ENCODE measurements at regions of chr4 and their contacts with region 1.

Region 1: GRCh38 chr4:42282081-42282901 is 115.0 kb upstream of the SHISA3 start:
- DNase-seq: peak; percentile 86
- H3K4me3 Mint-ChIP-seq: no peak overlapping the region
- H3K27ac Mint-ChIP-seq: no peak overlapping the region
- H3K4me1 Mint-ChIP-seq: no peaks in the 10 kb centered on the region
- H3K27me3 Mint-ChIP-seq: no peaks in the 10 kb centered on the region
- CTCF ChIP-seq: peak; percentile 82

Region 2: DNA sequence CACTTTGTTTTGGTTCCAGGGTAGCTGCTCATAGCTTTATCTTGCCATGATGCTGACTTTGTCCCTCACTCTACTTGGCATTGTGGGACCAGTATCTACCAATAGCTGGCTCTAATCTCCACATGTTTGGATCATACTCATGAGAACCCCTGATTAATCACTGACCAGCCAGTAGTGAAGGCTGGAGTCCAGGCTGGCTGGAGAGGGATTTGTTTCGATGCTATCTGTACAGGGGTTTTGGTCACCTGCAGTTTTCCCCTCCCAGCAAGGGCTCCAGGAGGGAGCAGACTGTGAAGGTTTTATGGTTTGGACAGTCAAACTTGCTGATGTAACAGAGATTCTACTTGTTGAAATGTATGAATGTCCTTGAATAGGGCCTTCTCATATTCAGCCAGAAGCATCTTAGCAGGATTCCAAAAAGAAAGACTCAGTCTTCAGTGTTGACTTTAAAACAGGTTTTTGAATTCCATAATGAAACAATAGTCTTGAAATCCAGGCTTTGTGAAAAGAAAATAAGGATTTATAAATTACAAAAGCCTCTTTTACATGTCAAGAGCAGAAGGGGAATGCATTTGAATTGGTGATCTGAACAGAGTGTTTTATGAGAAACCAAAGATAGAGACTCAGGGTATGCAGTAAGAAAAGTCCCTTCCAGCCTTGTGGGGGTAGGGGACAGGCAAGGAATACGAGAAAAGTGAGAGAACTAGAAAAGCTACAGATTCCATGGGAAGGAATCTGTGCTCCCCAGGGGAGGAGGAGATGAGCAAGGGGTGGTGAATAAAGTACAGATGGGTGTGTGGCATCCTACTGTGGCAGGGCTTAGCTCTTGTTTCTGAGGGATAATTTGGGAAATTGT is 11.9 kb after region 1 on chr4:
- CTCF ChIA-PET with region 1: interaction called, 17 read pairs
- POLR2A ChIA-PET with region 1: no interaction called
- intact Hi-C with region 1: no loop called
- DNase-seq: no peak
- H3K4me3 Mint-ChIP-seq: no peak overlapping the region
- H3K27ac Mint-ChIP-seq: no peak overlapping the region
- H3K4me1 Mint-ChIP-seq: no peaks in the 10 kb centered on the region
- H3K27me3 Mint-ChIP-seq: no peaks in the 10 kb centered on the region
- CTCF ChIP-seq: no peak

Region 3: DNA sequence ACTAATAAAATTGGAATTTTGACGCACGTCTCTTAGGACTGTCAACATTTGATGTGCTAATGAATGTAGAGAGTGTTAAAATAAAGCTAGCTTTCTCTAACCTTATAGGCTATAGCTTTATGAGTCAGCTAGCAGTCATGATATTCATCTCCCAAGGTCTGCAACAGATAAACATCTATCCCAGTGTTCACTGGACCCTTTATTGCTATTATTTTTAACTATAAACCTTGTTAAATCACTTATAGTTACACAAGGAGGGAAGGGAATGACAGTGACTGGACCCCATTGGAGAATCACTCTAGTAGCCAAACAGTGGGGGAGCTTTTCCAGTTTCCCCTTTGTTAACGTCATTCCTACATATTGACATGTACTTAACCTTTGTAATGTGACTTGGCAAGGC is 47.1 kb after region 1 on chr4:
- CTCF ChIA-PET with region 1: interaction called, 12 read pairs
- POLR2A ChIA-PET with region 1: no interaction called
- intact Hi-C with region 1: no loop called
- DNase-seq: no peak
- H3K4me3 Mint-ChIP-seq: no peak overlapping the region
- H3K27ac Mint-ChIP-seq: no peak overlapping the region
- H3K4me1 Mint-ChIP-seq: no peaks in the 10 kb centered on the region
- H3K27me3 Mint-ChIP-seq: no peaks in the 10 kb centered on the region
- CTCF ChIP-seq: no peak

Region 4: GRCh38 chr4:42519803-42520417 is 237.6 kb after region 1 on chr4:
- CTCF ChIA-PET with region 1: interaction called, 82 read pairs
- POLR2A ChIA-PET with region 1: interaction called, 5 read pairs
- intact Hi-C with region 1: loop called (anchors 1 kb)
- DNase-seq: peak; percentile 59
- H3K4me3 Mint-ChIP-seq: no peak overlapping the region
- H3K27ac Mint-ChIP-seq: no peak overlapping the region
- H3K4me1 Mint-ChIP-seq: peaks cover 4% of the 10 kb centered on the region
- H3K27me3 Mint-ChIP-seq: no peaks in the 10 kb centered on the region
- CTCF ChIP-seq: peak; percentile 40

Region 5: DNA sequence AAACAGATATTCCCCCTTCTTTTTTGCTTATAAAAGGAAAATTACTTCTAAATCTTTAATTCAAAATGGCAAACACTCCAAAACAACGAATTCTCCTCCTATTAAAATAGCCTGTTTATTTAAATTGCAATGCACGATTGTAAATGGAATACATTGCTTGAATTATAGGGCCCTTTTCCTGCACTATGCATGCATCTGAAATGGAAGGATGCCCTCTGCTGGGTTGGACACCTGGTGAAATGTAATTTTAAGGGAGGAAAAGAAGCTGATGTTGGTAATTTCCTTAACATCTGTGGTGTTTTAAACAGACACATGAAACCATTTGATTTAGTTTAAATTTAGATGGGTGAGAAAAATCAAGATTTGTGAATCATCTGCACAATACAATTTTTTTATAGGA is 683.0 kb after region 1 on chr4:
- CTCF ChIA-PET with region 1: no interaction called
- POLR2A ChIA-PET with region 1: no interaction called
- intact Hi-C with region 1: loop called (anchors 2 kb)
- DNase-seq: peak; percentile 50
- H3K4me3 Mint-ChIP-seq: no peak overlapping the region
- H3K27ac Mint-ChIP-seq: peak overlapping the region; percentile 69
- H3K4me1 Mint-ChIP-seq: peaks cover 11% of the 10 kb centered on the region
- H3K27me3 Mint-ChIP-seq: no peaks in the 10 kb centered on the region
- CTCF ChIP-seq: peak; percentile 33

Region 6: GRCh38 chr4:43103048-43103447 is 820.8 kb after region 1 on chr4:
- CTCF ChIA-PET with region 1: no interaction called
- POLR2A ChIA-PET with region 1: no interaction called
- intact Hi-C with region 1: no loop called
- DNase-seq: no peak
- H3K4me3 Mint-ChIP-seq: no peak overlapping the region
- H3K27ac Mint-ChIP-seq: no peak overlapping the region
- H3K4me1 Mint-ChIP-seq: no peaks in the 10 kb centered on the region
- H3K27me3 Mint-ChIP-seq: no peaks in the 10 kb centered on the region
- CTCF ChIP-seq: no peak